ENCODE measurements at regions of chr6 and their contacts with region 1.

Region 1: DNA sequence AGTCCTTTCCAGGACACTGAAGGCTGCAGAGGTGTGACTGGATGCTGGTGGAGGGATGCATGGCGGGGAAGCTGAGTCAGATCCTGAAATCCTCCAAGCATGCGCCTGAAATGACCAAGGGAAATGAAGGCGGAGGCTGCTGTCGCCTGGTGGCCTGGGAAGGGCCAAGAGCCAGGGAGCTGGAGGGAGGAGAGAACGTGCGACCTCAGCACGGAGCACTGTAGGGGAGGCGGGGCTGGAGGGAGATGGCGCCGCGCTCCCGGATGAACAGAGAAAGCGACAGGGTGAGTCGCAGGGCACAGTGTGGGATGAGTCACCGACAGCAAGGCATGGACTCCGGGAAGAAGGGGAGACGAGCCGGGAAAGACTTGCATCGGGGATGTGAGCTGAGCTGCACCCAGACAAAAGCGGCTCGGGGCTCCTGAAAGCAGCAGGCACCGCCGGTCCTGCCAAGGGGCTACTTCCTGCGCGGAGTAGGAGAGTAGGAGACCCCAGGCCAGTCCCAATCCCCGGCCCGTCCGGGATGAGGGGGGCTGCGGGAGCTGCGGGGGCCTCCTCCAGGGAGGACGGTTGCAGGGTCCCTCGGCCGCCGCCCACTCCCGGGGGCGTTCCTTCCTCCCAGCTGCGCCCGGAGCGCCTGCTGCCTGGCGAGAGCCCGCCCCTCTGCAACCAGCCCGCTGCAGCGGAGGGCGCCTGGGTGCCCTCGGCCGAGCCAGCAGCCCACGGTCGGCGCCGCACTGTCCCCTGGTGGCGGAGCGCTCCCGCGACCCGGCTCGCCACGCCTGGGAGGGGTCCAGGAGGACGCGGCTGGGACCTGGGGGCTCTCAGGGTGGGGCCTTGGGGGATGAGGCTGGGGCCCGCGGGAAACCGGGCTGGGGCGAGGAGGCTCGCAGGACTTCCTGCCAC is 11.0 kb upstream of the NQO2 start:
- DNase-seq: peak; percentile 87

Region 2: GRCh38 chr6:3258720-3259490 is 270.2 kb after region 1 on chr6 and contains the start of gene PSMG4:
- in situ Hi-C with region 1: no loop called
- DNase-seq: peak; percentile 77

Region 3: GRCh38 chr6:4018172-4018905 is 1029.7 kb after region 1 on chr6:
- in situ Hi-C with region 1: loop called (anchors 25 kb)
- DNase-seq: peak; percentile 99

Measured in KBM-7 (cell line).